Dorsolateral prefrontal cortex (tissue), 120 donors: ENCODE measurements at regions of chr5 and their contacts with region 1.

Region 1: GRCh38 chr5:150000256-150000989 is at the starts of genes HMGXB3 and TIGD6:
- DNase-seq: peak; percentile 85 to 98 (median 92)
- H3K4me3 ChIP-seq: peak within 1 kb of the TSS; percentile 69 to 100 (median 97)
- H3K27ac ChIP-seq: peak within 1 kb of the TSS; percentile 1 to 98 (median 90)
- H3K27me3 ChIP-seq: no peaks in the 10 kb centered on the region
- CTCF ChIP-seq: peak in 36 of 56 donors; percentile 9 to 57 (median 29)
- total RNA-seq, gene HMGXB3: 21.8 to 41.5 (median 30.5) TPM
- total RNA-seq, gene TIGD6: 2.6 to 13.1 (median 5.5) TPM

Region 2: GRCh38 chr5:149345147-149345875 is 655.1 kb before region 1 on chr5 and contains the start of gene GRPEL2:
- intact Hi-C with region 1: loop called in 1 of 2 experiments (anchors 5 kb)
- DNase-seq: peak; percentile 92 to 97 (median 96)
- H3K4me3 ChIP-seq: peak within 1 kb of the TSS; percentile 64 to 98 (median 89)
- H3K27ac ChIP-seq: peak within 1 kb of the TSS; percentile 6 to 94 (median 84)
- H3K27me3 ChIP-seq: peaks cover 0 to 16% (median 0%) of the 10 kb centered on the region in 45 donors
- CTCF ChIP-seq: peak in 41 of 56 donors; percentile 2 to 61 (median 33)
- total RNA-seq, gene GRPEL2: 9.0 to 25.3 (median 17.3) TPM

Region 3: GRCh38 chr5:149636851-149637246 is 363.6 kb before region 1 on chr5:
- intact Hi-C with region 1: loop called in 1 of 2 experiments (anchors 5 kb)
- DNase-seq: peak in 8 of 10 donors; percentile 35 to 95 (median 84)
- H3K4me3 ChIP-seq: no peak overlapping the region
- H3K27ac ChIP-seq: peak overlapping the region in 1 of 59 donors; percentile 12
- H3K27me3 ChIP-seq: no peaks in the 10 kb centered on the region
- CTCF ChIP-seq: peak; percentile 62 to 96 (median 84)

Region 4: GRCh38 chr5:149960272-149961185 is 39.9 kb before region 1 on chr5 and contains the start of gene SLC26A2:
- intact Hi-C with region 1: loop called (anchors 2 kb)
- DNase-seq: peak; percentile 96 to 100 (median 98)
- H3K4me3 ChIP-seq: peak within 1 kb of the TSS; percentile 70 to 99 (median 90)
- H3K27ac ChIP-seq: peak within 1 kb of the TSS; percentile 41 to 96 (median 84)
- H3K27me3 ChIP-seq: no peaks in the 10 kb centered on the region
- CTCF ChIP-seq: peak in 38 of 56 donors; percentile 4 to 65 (median 32)
- total RNA-seq, gene SLC26A2: 2.4 to 17.4 (median 6.9) TPM

Region 5: DNA sequence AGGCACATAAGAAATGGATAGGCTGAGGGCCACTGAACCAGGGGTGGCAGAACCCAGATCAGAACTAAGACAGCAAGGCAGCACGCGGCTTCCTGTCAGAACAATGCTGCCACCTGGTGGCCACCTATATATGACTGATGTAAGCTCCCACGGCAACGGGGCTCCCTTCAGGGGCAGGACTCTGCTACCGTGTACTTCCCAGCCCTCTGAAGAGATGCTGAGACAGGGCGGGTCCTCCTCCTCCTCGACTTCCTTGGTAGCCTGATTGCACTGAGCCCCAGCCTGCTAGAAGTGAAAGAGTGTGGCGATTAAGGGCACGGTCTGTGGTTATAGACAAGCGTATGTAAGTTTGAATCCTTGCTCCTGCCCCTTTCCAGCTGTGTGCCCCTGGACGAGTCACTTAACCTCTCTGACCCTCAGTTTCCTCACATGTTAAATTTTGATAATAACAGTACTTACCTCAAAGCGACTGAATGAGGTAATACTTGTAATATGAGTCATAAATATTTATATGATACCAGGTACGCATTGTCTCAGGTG is 435.8 kb after region 1 on chr5:
- intact Hi-C with region 1: no loop called
- DNase-seq: peak; percentile 86 to 98 (median 90)
- H3K4me3 ChIP-seq: peak overlapping the region in 10 of 59 donors; percentile 7 to 40 (median 21)
- H3K27ac ChIP-seq: peak overlapping the region in 27 of 59 donors; percentile 5 to 70 (median 46)
- H3K27me3 ChIP-seq: no peaks in the 10 kb centered on the region
- CTCF ChIP-seq: peak; percentile 84 to 99 (median 95)